Heart left ventricle (tissue), 16 donors: ENCODE measurements at regions of chr15 and their contacts with region 1.

Region 1: DNA sequence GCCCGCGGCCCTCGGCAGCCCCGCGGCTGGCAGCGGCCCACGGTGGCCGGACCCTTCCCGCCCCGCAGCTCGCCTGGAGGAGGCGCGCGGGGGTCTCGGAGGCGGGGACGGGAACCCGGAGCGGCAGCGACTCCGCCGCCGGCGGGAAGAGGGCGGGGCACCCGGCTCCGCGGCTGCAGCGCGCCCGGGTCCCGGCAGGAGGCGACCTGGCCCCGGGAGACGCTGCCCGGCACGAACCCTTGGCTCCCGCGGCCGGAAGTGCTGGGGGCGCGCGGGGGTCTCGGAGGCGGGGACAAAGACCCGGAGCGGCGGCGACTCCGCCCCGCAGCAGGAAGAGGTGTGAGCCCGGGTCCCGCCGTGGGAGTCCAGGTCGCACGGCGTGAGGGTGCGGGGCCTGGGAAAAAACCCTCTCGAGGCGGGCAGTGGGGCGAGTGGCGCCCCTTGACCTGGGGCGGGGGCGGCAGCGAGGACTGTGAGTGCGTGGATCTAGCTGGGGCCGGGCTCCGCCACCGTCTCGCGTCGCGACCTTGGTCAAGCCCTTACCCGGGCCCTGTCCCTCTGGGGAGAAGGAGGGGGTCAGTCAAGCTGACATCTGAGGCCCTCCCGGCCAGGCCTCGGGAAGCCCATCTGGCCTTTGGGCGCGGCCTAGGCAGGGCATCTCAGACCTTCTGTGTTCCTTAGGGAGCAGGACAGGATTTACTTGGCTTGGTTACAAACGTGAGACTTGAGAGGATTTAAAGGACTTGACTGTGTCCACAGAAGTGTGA is at the start of gene CIB2:
- DNase-seq: peak; percentile 76 to 90 (median 78)
- ATAC-seq: peak; percentile 48 to 95 (median 86)
- H3K4me3 ChIP-seq: peak within 1 kb of the TSS; percentile 58 to 97 (median 76)
- H3K27ac ChIP-seq: peak within 1 kb of the TSS; percentile 58 to 93 (median 80)
- H3K4me1 ChIP-seq: peaks cover 0 to 18% (median 7%) of the 10 kb centered on the region in 12 donors
- H3K27me3 ChIP-seq: no peaks in the 10 kb centered on the region
- CTCF ChIP-seq: peak; percentile 52 to 93 (median 83)
- POLR2A ChIP-seq: peak in 1 of 2 donors; percentile 47
- total RNA-seq, gene CIB2: 3.3 to 18.5 (median 10.4) TPM

Region 2: DNA sequence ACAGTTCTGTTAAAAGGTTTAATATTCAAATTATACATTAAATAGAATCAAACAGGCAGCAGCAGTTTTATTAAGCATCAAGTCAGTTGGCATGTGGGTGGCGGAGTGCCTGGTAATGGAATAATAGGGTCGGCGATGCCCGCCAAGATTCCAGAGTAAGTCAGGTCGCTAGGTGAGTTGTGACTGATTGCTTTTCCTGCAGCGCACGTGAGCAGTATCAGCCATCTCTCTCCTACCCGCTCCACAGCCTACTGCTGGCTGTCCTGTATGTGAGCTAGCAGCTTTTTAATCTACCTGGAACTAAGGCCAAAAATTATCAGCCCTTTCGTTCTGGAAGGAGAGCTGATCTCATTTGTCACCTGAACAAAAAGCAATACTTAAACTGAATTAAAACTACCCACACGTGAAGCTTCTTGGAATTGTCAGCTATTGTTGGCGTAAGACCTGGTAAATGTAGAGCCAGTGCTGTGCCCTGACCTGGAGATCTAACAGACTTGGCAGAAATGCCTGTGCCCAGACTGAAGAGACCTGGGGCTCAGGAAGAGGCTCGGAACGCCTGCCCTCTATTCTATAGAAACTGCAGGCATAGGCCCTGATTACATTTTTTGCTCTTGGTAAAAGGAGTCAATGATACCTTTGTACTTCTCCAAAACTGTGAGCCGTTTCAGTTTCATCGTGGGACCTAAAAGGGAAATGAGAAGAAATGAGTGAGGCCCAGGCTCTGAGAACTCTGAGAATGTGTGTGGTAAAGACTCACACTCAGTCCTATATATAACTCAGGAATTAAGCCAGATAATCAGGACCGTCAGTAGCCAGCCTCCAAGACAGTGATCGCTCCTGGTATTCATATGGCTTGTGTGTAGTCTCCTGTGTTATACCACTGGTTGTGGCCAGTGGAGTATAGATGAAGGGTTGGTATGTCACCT is 39.6 kb after region 1 on chr15:
- intact Hi-C with region 1: loop called in 2 of 10 experiments (anchors 2 to 5 kb)
- DNase-seq: no peak
- ATAC-seq: peak; percentile 35 to 56 (median 52)
- H3K4me3 ChIP-seq: no peak overlapping the region
- H3K27ac ChIP-seq: peak overlapping the region in 7 of 12 donors; percentile 0 to 74 (median 26)
- H3K4me1 ChIP-seq: peaks cover 0 to 27% (median 9%) of the 10 kb centered on the region in 12 donors
- H3K27me3 ChIP-seq: no peaks in the 10 kb centered on the region
- CTCF ChIP-seq: no peak
- POLR2A ChIP-seq: no peak

Region 3: DNA sequence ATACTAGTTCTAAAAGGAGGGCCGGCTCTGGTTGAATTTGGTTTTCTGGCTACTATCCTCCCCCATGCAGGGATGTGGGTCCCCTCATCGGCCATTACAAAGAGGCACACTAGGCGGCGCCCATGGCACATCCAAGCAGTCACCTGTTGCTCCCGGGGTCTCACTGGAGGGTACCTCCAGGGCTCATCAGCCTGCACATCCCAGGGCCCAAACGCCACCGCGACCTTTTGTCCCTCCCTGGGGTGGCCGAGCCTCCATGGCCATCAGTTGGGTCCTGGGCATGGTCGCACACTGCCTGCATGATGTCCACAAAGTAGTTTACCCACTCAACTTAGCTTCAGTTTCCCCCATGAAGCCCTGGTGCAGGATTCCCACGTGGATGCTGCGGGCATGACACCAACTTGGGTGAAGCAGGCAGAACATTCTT is 46.0 kb after region 1 on chr15:
- intact Hi-C with region 1: loop called in 2 of 10 experiments (anchors 2 to 5 kb)
- DNase-seq: peak in 3 of 5 donors; percentile 43 to 53 (median 43)
- ATAC-seq: peak in 3 of 4 donors; percentile 37 to 53 (median 51)
- H3K4me3 ChIP-seq: no peak overlapping the region
- H3K27ac ChIP-seq: no peak overlapping the region
- H3K4me1 ChIP-seq: peaks cover 0 to 7% (median 0%) of the 10 kb centered on the region in 12 donors
- H3K27me3 ChIP-seq: no peaks in the 10 kb centered on the region
- CTCF ChIP-seq: peak; percentile 41 to 72 (median 62)
- POLR2A ChIP-seq: no peak

Region 4: DNA sequence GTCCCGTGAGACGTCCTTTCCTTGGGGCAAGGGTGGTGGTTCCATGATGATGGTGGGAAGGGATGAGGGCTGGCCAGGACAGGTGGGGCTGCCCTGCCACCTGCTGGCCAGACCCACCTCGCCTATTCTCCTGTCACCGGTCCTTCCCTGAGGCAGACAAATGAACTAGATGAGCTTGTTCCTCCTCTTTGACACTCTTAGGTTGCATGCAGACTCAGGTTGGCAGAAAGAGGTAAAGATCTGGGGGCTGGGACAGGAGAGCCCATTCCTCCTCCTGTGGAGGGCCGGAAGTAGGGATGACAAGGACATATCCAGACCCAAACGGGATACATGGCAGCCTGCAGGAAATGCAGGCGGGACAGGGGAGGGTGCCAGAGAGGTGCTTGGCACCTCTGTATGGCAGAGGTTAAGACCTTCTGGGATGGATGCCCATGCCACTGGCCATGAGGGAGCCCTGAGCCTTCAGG is 64.3 kb after region 1 on chr15:
- intact Hi-C with region 1: loop called in 4 of 10 experiments (anchors 5 to 10 kb)
- DNase-seq: peak in 2 of 5 donors; percentile 28 to 67
- ATAC-seq: peak; percentile 79 to 86 (median 80)
- H3K4me3 ChIP-seq: no peak overlapping the region
- H3K27ac ChIP-seq: no peak overlapping the region
- H3K4me1 ChIP-seq: no peaks in the 10 kb centered on the region
- H3K27me3 ChIP-seq: no peaks in the 10 kb centered on the region
- CTCF ChIP-seq: peak; percentile 51 to 74 (median 64)
- POLR2A ChIP-seq: no peak